Activated naive CD4-positive, alpha-beta T cell treated with anti-CD3 and anti-CD28 coated beads, Interleukin-2, amount 10 ng/mL, durations not matched to agents 7 days and 5 days (primary cell): ENCODE measurements at regions of chr11 and their contacts with region 1.

Region 1: GRCh38 chr11:62665075-62665598 is at the starts of genes C11orf98 and CSKMT:
- DNase-seq: peak; percentile 96
- H3K4me3 Mint-ChIP-seq: peak within 1 kb of the TSS; percentile 96
- H3K27ac Mint-ChIP-seq: peak within 1 kb of the TSS; percentile 90
- H3K4me1 Mint-ChIP-seq: peaks cover 51% of the 10 kb centered on the region
- H3K27me3 Mint-ChIP-seq: peaks cover 7% of the 10 kb centered on the region

Region 2: DNA sequence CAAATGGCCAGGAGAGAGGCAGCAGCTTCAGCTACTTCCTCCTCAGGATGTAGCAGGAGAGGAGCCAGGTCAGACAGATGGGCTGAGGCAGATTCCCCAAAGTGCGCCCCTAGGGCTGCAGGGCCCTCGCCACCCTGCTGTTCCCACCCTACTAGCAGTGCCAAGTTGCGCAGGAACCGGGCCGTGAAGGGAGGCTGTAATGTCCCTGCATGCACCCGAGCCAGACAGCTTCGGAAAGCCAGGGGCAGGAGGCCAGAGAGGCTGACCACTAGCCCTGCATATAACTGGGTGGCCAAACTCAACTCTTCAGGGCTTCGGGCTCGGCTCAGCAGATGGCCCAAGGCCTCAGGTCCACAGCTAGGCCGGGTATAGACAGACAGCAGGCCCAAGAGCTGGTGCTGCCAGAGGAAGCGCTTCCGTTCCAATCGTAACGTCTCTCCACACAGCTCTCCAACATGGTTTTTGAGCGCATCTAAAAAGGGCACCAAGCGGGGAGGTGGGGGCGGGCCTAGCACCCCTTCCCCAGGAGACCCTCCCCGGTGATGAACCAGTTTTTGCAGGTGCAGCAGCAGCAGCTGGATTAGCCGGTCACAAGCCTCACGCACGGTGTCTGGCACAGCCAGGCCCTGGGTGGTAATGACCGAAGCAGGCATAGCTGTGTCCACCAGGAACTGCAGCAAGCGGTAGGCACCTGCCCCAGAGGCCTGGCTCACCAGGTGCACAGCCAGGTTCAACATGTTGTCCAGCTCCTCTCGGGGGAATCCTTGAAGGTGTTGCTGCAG is 16.8 kb before region 1 on chr11:
- CTCF ChIA-PET with region 1: interaction called, 11 read pairs
- DNase-seq: no peak
- H3K4me3 Mint-ChIP-seq: no peak overlapping the region
- H3K27ac Mint-ChIP-seq: peak overlapping the region; percentile 54
- H3K4me1 Mint-ChIP-seq: peaks cover 43% of the 10 kb centered on the region
- H3K27me3 Mint-ChIP-seq: peaks cover under 1% of the 10 kb centered on the region

Region 3: DNA sequence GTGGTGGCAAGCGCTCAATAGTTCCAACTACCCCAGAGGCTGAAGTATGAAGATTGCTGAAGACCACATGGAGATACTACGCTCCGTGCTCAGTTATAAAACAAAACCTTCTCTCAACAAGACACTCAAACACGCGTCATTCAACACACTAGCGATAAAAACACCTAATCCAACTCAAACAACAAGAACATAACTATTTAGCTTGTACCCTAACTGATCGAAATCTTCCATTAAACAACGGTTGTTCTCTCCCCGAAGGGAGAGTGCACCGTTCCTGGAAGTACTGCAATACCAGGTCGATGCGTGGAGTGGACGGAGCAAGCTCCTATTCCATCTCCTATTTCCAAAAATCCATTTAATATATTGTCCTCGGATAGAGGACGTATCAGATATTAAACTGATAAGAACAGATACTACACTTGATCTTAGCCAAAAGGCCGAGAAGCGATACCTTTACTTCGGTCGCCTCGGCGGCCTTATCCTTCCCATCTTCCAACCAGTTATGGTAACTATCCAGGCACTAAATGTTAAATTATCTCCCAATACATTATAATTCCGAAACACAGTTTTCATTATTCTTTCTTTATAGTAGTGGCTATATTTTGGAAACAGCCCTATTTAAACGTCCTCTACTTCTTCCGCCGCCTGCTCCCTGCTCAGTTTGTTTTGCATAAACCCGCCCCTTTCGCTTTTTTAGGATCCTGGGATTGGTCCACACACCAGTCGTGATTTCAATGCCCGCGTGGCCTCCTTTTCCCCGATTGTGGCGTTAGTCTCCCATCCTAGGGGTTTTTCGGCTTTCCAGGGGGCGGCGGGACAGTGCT is 176.4 kb after region 1 on chr11:
- CTCF ChIA-PET with region 1: no interaction called
- DNase-seq: peak; percentile 91
- H3K4me3 Mint-ChIP-seq: no peak overlapping the region
- H3K27ac Mint-ChIP-seq: no peak overlapping the region
- H3K4me1 Mint-ChIP-seq: peaks cover 22% of the 10 kb centered on the region
- H3K27me3 Mint-ChIP-seq: no peaks in the 10 kb centered on the region